OCI-LY7 (cell line): ENCODE measurements at regions of chr16 and their contacts with region 1.

Region 1: DNA sequence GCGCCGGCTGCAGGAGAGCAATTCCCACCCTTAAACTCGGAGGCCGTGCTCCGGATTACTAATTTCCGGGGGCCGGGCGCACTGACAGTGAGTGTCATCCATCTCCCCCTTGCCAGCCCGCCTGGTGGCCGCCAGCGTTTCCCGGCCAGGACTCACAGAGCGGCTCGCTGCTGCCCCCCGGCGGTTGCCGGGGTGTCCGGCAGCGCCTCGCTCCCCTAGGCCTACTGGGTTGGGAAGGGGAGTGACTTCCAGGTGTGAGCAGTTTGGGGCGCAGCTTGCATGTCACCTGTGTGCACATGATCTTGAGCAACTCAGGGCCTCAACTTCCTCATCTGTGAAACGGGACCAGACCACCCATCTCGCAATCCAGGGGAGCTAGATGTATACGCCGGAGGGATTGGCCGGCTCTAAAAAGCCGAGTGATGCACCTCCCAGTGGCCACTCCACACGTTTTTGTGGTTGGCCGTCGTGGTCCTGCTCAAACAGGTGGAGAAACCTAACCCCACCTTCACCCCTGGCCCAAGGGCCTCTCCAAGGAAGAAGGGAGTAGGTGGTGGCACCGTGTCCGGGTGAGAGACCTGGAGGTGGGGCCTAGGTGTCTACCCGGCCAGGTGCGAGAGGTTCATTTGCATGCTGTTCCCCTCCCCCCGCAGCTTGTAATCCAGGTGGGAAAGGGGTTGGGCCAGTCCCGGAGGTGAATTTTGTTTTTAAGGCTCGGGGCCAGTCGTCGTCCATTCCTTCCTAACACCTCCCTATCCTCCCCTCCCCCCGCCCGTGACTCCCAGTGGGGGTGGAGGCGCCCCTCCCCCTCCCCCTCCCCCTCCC is 2.4 kb upstream of the GSE1 start:
- DNase-seq: peak; percentile 91
- H3K4me3 ChIP-seq: peak overlapping the region; percentile 76
- H3K27ac ChIP-seq: peak overlapping the region; percentile 86
- H3K4me1 ChIP-seq: peaks cover 75% of the 10 kb centered on the region
- CTCF ChIP-seq: peak; percentile 94

Region 2: GRCh38 chr16:85479972-85480751 is 130.6 kb before region 1 on chr16:
- CTCF ChIA-PET with region 1: interaction called, 3 read pairs
- POLR2A ChIA-PET with region 1: no interaction called
- intact Hi-C with region 1: loop called (anchors 1 kb)
- DNase-seq: peak; percentile 76
- H3K4me3 ChIP-seq: no peak overlapping the region
- H3K27ac ChIP-seq: no peak overlapping the region
- H3K4me1 ChIP-seq: peaks cover 10% of the 10 kb centered on the region
- CTCF ChIP-seq: peak; percentile 78

Region 3: DNA sequence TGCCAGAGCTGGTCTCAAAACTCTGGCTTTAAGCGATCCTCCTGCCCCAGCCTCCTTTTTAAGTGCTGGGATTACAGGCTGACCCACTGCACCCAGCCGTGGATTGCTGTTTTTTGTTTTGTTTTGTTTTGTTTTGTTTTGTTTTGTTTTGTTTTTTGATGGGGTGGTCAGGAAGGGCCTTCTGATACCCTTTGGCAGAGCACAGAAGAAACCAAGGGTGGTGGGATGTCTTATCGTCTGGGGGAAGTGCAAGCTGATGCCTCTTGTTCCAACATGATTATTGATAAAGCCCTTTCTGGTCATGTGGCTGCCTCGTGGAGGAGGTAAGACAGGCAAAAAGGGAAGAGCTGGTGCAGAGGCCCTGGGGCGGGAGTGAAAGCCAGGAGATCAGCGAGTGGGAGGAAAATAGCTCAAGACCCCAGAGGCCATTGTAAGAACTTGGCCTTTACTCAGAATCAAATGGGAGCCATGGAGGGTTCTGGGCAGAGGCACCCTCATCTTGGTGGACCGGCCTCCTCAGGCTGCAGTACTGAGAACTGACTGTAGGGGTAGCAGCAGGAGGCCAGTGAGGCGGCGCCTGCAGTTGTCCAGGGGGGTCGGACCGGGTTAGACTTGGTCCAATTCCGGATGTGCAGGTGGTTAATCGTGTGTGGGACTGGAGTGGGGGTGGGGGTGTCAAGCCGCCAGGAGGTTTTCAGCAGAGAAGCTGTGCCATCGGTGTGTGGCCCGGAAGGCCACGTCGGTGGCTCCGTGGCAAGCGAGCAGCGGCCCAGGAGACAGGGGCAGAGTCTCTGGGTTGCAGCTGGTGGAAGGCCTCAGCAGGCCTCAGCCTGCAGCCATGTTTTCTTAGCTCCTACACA is 82.0 kb before region 1 on chr16:
- CTCF ChIA-PET with region 1: interaction called, 12 read pairs
- POLR2A ChIA-PET with region 1: interaction called, 3 read pairs
- intact Hi-C with region 1: loop called (anchors 1 kb)
- DNase-seq: peak; percentile 79
- H3K4me3 ChIP-seq: no peak overlapping the region
- H3K27ac ChIP-seq: no peak overlapping the region
- H3K4me1 ChIP-seq: peaks cover 21% of the 10 kb centered on the region
- CTCF ChIP-seq: peak; percentile 72

Region 4: GRCh38 chr16:85569615-85570212 is 41.0 kb before region 1 on chr16:
- CTCF ChIA-PET with region 1: no interaction called
- POLR2A ChIA-PET with region 1: no interaction called
- intact Hi-C with region 1: loop called (anchors 5 kb)
- DNase-seq: peak; percentile 70
- H3K4me3 ChIP-seq: peak overlapping the region; percentile 37
- H3K27ac ChIP-seq: peak overlapping the region; percentile 14
- H3K4me1 ChIP-seq: peaks cover 33% of the 10 kb centered on the region
- CTCF ChIP-seq: no peak

Region 5: GRCh38 chr16:85659805-85660495 is 49.2 kb after region 1 on chr16:
- CTCF ChIA-PET with region 1: no interaction called
- POLR2A ChIA-PET with region 1: no interaction called
- intact Hi-C with region 1: no loop called
- DNase-seq: peak; percentile 69
- H3K4me3 ChIP-seq: no peak overlapping the region
- H3K27ac ChIP-seq: no peak overlapping the region
- H3K4me1 ChIP-seq: no peaks in the 10 kb centered on the region
- CTCF ChIP-seq: peak; percentile 95